PC-3 (cell line): ENCODE measurements at regions of chr14 and their contacts with region 1.

Region 1: DNA sequence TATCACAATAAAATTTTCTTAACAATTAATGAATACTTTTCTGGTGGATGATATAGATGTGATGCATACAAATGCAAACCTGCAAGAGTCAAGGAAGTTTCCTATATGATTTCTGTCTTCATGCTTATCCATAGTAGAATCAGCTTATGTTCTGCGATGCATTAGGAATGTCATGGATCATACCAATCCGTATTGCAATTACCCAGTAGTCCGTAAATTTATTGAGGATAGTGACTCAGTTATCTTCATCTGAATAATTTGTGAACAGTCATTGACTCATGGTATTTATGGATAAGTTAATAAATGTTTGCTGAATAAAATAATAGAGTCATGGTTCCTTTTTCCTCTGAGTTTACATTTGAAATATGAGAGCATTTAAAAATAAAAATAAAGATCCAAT is 483.4 kb downstream of the LRFN5 start:
- DNase-seq: peak; percentile 73
- ATAC-seq: peak; percentile 88
- H3K4me3 ChIP-seq: no peak overlapping the region
- H3K27ac ChIP-seq: no peak overlapping the region
- H3K4me1 ChIP-seq: peaks cover 11% of the 10 kb centered on the region
- H3K27me3 ChIP-seq: no peaks in the 10 kb centered on the region
- CTCF ChIP-seq: no peak

Region 2: DNA sequence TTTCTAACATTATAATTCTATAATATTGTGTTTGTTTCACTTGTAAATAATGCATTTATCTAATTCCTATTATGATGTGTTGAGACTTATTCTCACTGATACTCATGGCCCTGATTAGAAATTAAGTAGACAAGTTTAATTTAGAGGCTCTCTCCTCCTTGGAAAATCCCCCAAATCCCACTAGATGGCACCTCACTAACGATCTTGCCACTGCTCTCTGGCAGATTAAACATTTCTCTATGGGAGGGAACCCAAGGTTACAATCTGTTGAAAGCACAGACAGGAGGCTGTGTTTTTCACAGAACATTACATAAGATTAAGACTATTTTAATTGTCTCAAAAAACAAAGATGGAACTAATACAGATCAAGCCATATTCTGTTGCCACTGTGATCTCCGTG is 164.7 kb before region 1 on chr14:
- CTCF ChIA-PET with region 1: no interaction called
- POLR2A ChIA-PET with region 1: no interaction called
- intact Hi-C with region 1: loop called (anchors 5 kb)
- DNase-seq: peak; percentile 63
- ATAC-seq: peak; percentile 97
- H3K4me3 ChIP-seq: no peak overlapping the region
- H3K27ac ChIP-seq: no peak overlapping the region
- H3K4me1 ChIP-seq: no peaks in the 10 kb centered on the region
- H3K27me3 ChIP-seq: no peaks in the 10 kb centered on the region
- CTCF ChIP-seq: peak; percentile 73

Region 3: DNA sequence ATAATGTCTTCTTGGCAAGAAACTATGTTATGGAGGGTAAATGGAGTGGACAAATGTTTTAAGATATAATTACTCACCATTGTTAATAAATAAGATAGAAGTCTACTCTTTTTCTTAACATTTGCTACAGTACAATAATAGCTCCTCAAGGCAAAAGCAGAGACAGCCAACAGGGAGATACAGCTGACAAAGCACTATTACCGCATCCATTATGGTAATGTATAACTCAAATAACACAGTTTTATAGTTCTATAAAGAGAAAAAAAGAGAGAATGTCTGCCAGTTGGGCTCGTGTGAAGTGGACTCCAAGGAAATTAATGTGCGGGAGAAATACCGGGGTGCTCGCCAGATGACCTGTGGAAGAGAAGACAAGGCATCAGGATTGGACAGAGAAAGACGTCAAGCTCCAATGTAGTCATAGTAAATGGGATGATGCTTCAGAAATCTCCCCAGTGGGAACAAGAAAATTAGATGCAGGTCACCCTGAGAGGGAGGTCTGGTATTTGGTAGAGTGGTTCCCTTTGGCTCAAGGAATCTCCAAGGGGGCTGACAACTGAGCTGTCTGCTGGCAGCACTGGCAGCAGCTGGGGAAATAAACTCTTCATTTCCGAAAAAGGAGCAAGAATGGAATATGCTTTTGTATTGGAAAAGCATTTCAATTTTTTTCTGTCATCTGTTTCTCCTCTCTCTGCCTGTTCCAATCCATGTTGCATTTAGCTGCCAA is 139.5 kb before region 1 on chr14:
- CTCF ChIA-PET with region 1: no interaction called
- POLR2A ChIA-PET with region 1: no interaction called
- intact Hi-C with region 1: no loop called
- DNase-seq: no peak
- ATAC-seq: no peak; the same call in 1 of the 2 replicates
- H3K4me3 ChIP-seq: no peak overlapping the region
- H3K27ac ChIP-seq: no peak overlapping the region
- H3K4me1 ChIP-seq: no peaks in the 10 kb centered on the region
- H3K27me3 ChIP-seq: no peaks in the 10 kb centered on the region
- CTCF ChIP-seq: no peak

Region 4: DNA sequence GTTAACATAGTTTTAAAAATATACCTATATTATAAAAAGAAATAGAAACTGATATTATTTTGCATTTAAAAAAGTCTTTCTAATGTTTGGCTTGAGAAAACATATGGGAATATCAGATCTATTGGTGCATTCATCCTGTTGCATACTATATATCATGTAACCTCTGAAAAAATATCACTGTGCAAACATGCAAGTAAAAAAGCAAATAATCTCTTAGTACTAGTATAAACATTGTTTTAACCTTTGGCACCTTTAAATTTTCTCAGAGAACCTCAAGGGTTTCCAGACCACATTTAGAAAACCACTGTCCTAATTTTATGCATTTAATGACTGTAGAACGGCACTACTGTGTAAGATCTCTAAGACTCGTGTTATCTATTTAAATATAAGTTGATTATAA is 66.7 kb before region 1 on chr14:
- CTCF ChIA-PET with region 1: no interaction called
- POLR2A ChIA-PET with region 1: interaction called, 4 read pairs
- intact Hi-C with region 1: loop called (anchors 5 kb)
- DNase-seq: peak; percentile 65
- ATAC-seq: peak; percentile 94
- H3K4me3 ChIP-seq: no peak overlapping the region
- H3K27ac ChIP-seq: no peak overlapping the region
- H3K4me1 ChIP-seq: no peaks in the 10 kb centered on the region
- H3K27me3 ChIP-seq: no peaks in the 10 kb centered on the region
- CTCF ChIP-seq: no peak

Region 5: GRCh38 chr14:42140831-42141279 is 50.7 kb after region 1 on chr14:
- CTCF ChIA-PET with region 1: no interaction called
- POLR2A ChIA-PET with region 1: no interaction called
- intact Hi-C with region 1: loop called (anchors 2 kb)
- DNase-seq: peak; percentile 90
- ATAC-seq: peak; percentile 93
- H3K4me3 ChIP-seq: peak overlapping the region; percentile 1; the same call in 1 of the 2 replicates
- H3K27ac ChIP-seq: peak overlapping the region; percentile 89
- H3K4me1 ChIP-seq: peaks cover 28% of the 10 kb centered on the region
- H3K27me3 ChIP-seq: no peaks in the 10 kb centered on the region
- CTCF ChIP-seq: no peak